ENCODE measurements at regions of chr5 and their contacts with region 1.

Region 1: DNA sequence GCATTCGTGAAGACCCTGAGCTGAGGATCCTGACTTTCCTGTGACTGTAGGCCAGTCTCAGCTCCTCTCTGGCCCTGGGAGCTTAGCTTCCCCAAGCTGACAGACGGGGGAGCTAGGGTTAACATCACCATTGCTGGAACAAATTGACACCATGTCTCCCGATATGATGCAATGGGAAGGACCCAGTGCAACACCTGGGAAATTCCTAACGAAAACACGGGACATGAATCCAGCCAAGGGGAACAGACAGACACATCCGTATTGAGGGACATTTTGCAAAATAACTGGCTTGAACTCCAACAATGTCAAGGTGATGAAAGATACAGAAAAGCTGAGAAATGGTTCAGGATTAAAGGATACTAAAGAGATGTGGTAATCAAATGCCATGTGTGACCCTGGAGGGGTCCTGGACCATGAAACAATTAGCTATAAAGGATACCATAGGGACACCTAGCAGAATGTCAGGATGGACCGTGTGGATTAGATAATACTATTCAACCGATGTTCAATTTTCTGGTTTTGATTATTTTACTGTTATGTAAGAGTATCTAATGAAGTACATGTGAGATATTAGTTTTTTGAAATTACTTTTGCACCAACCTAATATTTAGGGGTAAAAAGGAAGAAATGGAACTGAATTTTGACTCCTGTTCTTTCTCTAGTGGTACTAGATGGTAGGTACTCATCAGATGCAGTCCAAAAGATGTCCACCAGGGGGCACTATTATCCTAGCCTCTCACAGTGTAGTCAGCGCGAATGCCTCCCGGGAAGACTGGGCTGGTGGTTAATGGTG is 52.7 kb downstream of the NDST1 start:
- DNase-seq: peak; percentile 87 to 90 (median 90)
- ATAC-seq: peak; percentile 96
- H3K4me3 ChIP-seq: no peak overlapping the region
- H3K27ac ChIP-seq: no peak overlapping the region
- H3K4me1 ChIP-seq: peaks cover 0 to 4% of the 10 kb centered on the region in 2 experiments; a peak in 1 of 5 replicates
- H3K27me3 ChIP-seq: no peaks in the 10 kb centered on the region
- CTCF ChIP-seq: peak; percentile 78 to 93 (median 87)
- EP300 ChIP-seq: peak; percentile 40; the same call in 1 of the 2 replicates
- POLR2A ChIP-seq: no peak
- RAD21 ChIP-seq: peak; percentile 92 to 95

Region 2: DNA sequence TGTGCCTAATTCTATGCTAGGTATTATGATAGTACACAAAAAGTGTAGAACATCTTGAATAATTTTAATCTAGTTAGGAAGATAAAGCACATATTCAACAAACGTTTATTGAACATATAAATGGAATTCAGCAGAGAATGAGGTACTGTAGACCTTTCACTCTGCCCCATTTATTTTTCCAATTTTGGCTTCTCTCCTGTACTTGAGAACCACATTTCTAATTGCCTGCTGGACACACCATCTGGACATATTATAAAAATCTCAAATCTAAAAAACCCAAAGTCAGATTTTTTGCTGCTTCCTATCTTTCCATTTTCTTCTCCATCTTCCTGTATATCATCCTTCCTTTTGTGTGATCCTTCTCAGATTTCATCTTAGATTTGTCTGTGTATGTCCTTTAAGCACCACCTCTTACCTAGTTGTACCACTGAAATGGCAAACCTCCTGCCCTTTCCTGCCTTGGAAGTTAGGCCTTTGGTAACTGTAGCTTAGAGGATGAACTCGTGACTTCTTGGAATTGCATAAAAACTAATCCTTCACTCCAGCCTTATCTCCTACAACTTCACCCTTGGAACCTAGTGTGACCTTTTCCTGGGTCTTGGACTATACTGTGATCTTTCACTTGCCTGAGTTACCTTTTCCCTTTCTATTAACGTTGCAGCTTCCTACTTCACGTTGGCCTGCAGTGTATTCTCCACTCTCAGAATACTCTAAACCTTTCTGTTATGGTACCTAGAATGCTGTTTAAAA is 591.2 kb before region 1 on chr5:
- CTCF ChIA-PET with region 1: no interaction called
- POLR2A ChIA-PET with region 1: no interaction called
- in situ Hi-C with region 1: no loop called
- intact Hi-C with region 1: no loop called
- DNase-seq: no peak
- ATAC-seq: no peak
- H3K4me3 ChIP-seq: no peak overlapping the region
- H3K27ac ChIP-seq: no peak overlapping the region
- H3K4me1 ChIP-seq: peaks cover 0 to 9% of the 10 kb centered on the region in 2 experiments; a peak in 3 of 5 replicates
- H3K27me3 ChIP-seq: no peaks in the 10 kb centered on the region
- CTCF ChIP-seq: no peak
- EP300 ChIP-seq: no peak
- POLR2A ChIP-seq: no peak
- RAD21 ChIP-seq: no peak

Region 3: DNA sequence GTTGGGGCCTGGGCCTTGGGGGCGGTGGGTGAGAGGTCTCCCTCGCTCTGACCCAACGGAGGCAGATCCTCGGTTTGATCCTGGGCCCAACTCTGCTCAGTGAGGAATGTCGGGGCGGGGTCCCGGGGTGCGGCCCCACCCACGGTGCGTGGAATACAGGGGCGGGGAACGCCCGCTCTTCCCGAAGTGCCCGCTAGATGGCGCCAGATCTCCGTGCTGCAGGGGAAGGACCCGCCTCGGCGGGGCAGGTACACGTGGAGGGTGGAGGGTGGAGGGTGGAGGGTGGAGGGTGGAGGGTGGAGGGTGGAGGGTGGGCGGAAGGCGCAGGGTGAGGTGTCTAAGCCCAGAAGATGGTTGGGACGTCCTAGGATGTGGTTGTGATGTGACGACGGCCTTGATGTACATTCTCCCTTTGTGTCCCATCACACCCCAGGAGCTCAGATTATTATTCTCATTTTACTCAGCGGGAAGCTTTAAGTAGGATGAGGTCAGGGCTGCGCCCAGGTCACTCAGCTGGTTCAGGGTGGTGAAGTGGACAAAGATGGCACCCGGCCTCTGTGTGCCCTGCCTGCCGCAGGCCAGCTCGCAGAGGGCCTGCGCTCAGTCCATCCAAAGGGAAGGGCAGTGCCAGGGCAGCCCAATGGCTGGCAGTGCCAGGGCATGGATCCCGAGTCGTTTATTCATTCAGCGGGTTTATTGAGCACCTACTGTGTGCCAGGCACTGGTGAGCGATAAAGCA is 101.6 kb before region 1 on chr5:
- CTCF ChIA-PET with region 1: interaction called, 4 read pairs
- POLR2A ChIA-PET with region 1: interaction called, 7 read pairs
- in situ Hi-C with region 1: no loop called
- intact Hi-C with region 1: loop called (anchors 1 kb)
- DNase-seq: peak; percentile 88 to 95 (median 92)
- ATAC-seq: peak; percentile 94
- H3K4me3 ChIP-seq: no peak overlapping the region
- H3K27ac ChIP-seq: no peak overlapping the region
- H3K4me1 ChIP-seq: peaks cover 23 to 39% of the 10 kb centered on the region in 2 experiments; a peak in 4 of 5 replicates
- H3K27me3 ChIP-seq: no peaks in the 10 kb centered on the region
- CTCF ChIP-seq: peak; percentile 68 to 92 (median 85)
- EP300 ChIP-seq: no peak
- POLR2A ChIP-seq: no peak
- RAD21 ChIP-seq: peak; percentile 67 to 80

Region 4: DNA sequence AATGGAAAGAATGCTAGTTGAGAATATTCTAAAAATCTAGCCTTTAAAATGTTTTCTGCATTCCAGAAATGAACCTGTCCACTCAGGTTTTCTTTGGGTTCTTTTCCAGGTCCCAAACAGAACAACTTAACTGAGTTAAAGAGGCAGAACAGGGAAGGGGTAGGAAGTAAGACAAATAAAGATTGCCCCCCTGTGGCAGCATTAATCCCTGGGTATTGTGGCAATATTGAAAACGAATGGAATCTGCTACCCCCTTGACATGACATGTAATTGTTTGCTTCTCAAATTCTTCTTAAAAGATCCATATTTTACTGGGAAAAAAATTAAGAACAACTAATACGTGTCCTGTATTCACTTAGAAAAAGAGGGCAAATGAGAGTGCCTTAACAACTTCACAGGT is 149.6 kb after region 1 on chr5:
- CTCF ChIA-PET with region 1: interaction called, 9 read pairs
- POLR2A ChIA-PET with region 1: interaction called, 3 read pairs
- in situ Hi-C with region 1: no loop called
- intact Hi-C with region 1: loop called (anchors 2 kb)
- DNase-seq: peak in 2 of 4 experiments; percentile 20 to 22
- ATAC-seq: peak; percentile 28; the same call in 1 of the 3 replicates
- H3K4me3 ChIP-seq: no peak overlapping the region
- H3K27ac ChIP-seq: no peak overlapping the region
- H3K4me1 ChIP-seq: no peaks in the 10 kb centered on the region
- H3K27me3 ChIP-seq: no peaks in the 10 kb centered on the region
- CTCF ChIP-seq: peak; percentile 10 to 49 (median 24); a peak in 2 of 6 replicates
- EP300 ChIP-seq: no peak
- POLR2A ChIP-seq: no peak
- RAD21 ChIP-seq: peak; percentile 31 to 50; a peak in 3 of 4 replicates

Region 5: GRCh38 chr5:150801117-150801927 is 240.7 kb after region 1 on chr5:
- CTCF ChIA-PET with region 1: interaction called, 3 read pairs
- POLR2A ChIA-PET with region 1: no interaction called
- in situ Hi-C with region 1: no loop called
- intact Hi-C with region 1: loop called (anchors 2 kb)
- DNase-seq: peak; percentile 41 to 72 (median 48)
- ATAC-seq: peak; percentile 93
- H3K4me3 ChIP-seq: peak overlapping the region; percentile 30
- H3K27ac ChIP-seq: peak overlapping the region; percentile 53; the same call in 2 of the 3 replicates
- H3K4me1 ChIP-seq: peaks cover 0 to 8% of the 10 kb centered on the region in 2 experiments; a peak in 2 of 5 replicates
- H3K27me3 ChIP-seq: no peaks in the 10 kb centered on the region
- CTCF ChIP-seq: peak; percentile 51 to 71 (median 66)
- EP300 ChIP-seq: no peak
- POLR2A ChIP-seq: no peak
- RAD21 ChIP-seq: peak; percentile 17 to 64; a peak in 3 of 4 replicates

Region 6: GRCh38 chr5:150989695-150990094 is 429.1 kb after region 1 on chr5:
- CTCF ChIA-PET with region 1: interaction called, 4 read pairs
- POLR2A ChIA-PET with region 1: no interaction called
- in situ Hi-C with region 1: no loop called
- intact Hi-C with region 1: loop called (anchors 10 kb)
- DNase-seq: peak in 3 of 4 experiments; percentile 19 to 47 (median 37)
- ATAC-seq: peak; percentile 91
- H3K4me3 ChIP-seq: no peak overlapping the region
- H3K27ac ChIP-seq: no peak overlapping the region
- H3K4me1 ChIP-seq: 0 out of 5 replicates have a peak, but pooled peaks cover 0 to 2% of the 10 kb centered on the region in 2 experiments
- H3K27me3 ChIP-seq: no peaks in the 10 kb centered on the region
- CTCF ChIP-seq: peak; percentile 54 to 62 (median 60)
- EP300 ChIP-seq: no peak
- POLR2A ChIP-seq: no peak
- RAD21 ChIP-seq: peak in 1 of 2 experiments; percentile 69; a peak in 2 of 4 replicates